Activated T-helper 1 cell treated with anti-CD3 and anti-CD28 coated beads, Interleukin-12 subunit alpha, Interleukin-12 subunit beta, Interleukin-2, Interleukin-4 antibody, amounts not matched to agents 30 ng/mL and 10 ng/mL and 1 ng/mL, durations not matched to agents 14 hours and 24 hours and 36 hours (primary cell): ENCODE measurements at regions of chr2 and their contacts with region 1.

Region 1: GRCh38 chr2:179253226-179253625 is 11.4 kb downstream of the SESTD1 start:
- DNase-seq: no peak
- H3K4me3 Mint-ChIP-seq: peak overlapping the region; percentile 12
- H3K27ac Mint-ChIP-seq: peak overlapping the region; percentile 73
- H3K4me1 Mint-ChIP-seq: peaks cover 61% of the 10 kb centered on the region
- H3K27me3 Mint-ChIP-seq: no peaks in the 10 kb centered on the region

Region 2: DNA sequence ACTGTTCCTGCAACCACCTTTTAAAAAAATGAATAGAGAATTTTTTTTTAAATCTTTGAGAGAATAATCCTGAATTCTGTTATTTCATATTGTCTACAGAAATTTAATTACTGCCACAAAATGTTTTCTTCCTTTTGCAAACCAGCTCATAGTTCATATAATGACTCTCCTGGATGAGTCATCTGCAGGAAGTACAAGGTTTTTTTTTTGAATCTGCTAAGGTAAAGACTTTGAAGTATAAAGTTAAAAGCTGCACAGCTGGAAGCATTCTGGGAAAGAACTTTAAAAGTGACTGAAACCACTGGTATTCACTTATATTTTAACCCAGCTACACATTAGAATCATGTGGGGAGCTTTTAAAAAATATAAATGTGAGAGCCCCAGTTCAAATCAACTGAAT is 14.0 kb before region 1 on chr2:
- intact Hi-C with region 1: loop called (anchors 1 kb)
- DNase-seq: no peak
- H3K4me3 Mint-ChIP-seq: no peak overlapping the region
- H3K27ac Mint-ChIP-seq: no peak overlapping the region
- H3K4me1 Mint-ChIP-seq: peaks cover 64% of the 10 kb centered on the region
- H3K27me3 Mint-ChIP-seq: peaks cover 2% of the 10 kb centered on the region